ENCODE measurements at regions of chr9 and their contacts with region 1.

Region 1: GRCh38 chr9:4182831-4183230 is 117.0 kb downstream of the GLIS3 start:
- DNase-seq: no peak
- ATAC-seq: no peak
- H3K4me3 ChIP-seq: no peak overlapping the region
- H3K4me3 Mint-ChIP-seq: no peak overlapping the region
- H3K27ac ChIP-seq: no peak overlapping the region
- H3K27ac Mint-ChIP-seq: no peak overlapping the region
- H3K4me1 ChIP-seq: no peaks in the 10 kb centered on the region
- H3K4me1 Mint-ChIP-seq: no peaks in the 10 kb centered on the region
- H3K27me3 ChIP-seq: no peaks in the 10 kb centered on the region
- H3K27me3 Mint-ChIP-seq: peaks cover 3 to 5% of the 10 kb centered on the region in 2 donors

Region 2: GRCh38 chr9:4366591-4367330 is 183.9 kb after region 1 on chr9:
- CTCF ChIA-PET with region 1: interaction called in 1 of 2 experiments, 11 read pairs
- POLR2A ChIA-PET with region 1: no interaction called
- DNase-seq: peak in 12 of 35 experiments; percentile 4 to 57 (median 12)
- ATAC-seq: no peak
- H3K4me3 ChIP-seq: no peak overlapping the region
- H3K4me3 Mint-ChIP-seq: no peak overlapping the region
- H3K27ac ChIP-seq: no peak overlapping the region
- H3K27ac Mint-ChIP-seq: no peak overlapping the region
- H3K4me1 ChIP-seq: no peaks in the 10 kb centered on the region
- H3K4me1 Mint-ChIP-seq: no peaks in the 10 kb centered on the region
- H3K27me3 ChIP-seq: no peaks in the 10 kb centered on the region
- H3K27me3 Mint-ChIP-seq: peaks cover 2 to 4% of the 10 kb centered on the region in 2 donors

Measured in T-cell (primary cell).